Left ventricle myocardium superior (tissue), 1 donor: ENCODE measurements at regions of chr19 and their contacts with region 1.

Region 1: GRCh38 chr19:15563325-15563794 is 51.7 kb upstream of the CYP4F8 start:
- DNase-seq: peak; percentile 65
- ATAC-seq: peak; percentile 92

Region 2: GRCh38 chr19:15081911-15082310 is 481.4 kb before region 1 on chr19 and contains the start of gene OR1I1:
- intact Hi-C with region 1: loop called (anchors 10 kb)
- DNase-seq: no peak
- ATAC-seq: no peak
- total RNA-seq, gene OR1I1: not detected

Region 3: DNA sequence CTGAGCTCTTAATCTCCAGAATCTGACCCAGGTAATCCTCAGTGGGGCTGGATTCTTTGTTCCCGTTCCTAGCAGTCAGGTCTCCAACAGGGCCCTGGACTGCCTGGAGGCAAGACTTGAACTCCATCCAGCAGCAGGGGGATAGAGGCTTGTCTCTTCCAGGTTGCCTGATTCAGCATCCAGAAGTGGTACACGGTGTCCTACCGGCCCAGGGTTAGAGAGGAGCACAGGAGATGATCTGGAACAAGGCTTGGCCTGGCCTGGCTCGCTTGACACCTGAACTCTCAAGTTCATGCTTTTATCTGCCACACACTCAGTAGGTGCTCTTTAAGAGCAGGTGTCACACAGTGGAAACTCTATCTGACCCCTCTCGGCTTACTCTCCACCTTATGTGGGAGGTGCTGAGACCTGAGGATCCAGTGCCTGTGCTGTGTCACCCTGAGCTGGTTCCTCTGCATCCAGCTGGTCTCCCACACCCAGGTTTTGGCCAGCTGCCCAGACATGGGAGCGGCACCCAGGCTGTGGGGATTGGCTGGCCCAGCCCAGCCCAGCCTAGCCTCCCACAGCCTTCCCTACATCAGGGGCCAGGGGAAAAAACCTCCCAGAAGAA is 77.0 kb after region 1 on chr19 and contains the start of gene CYP4F3:
- intact Hi-C with region 1: no loop called
- DNase-seq: peak; percentile 85
- ATAC-seq: peak; percentile 95
- total RNA-seq, gene CYP4F3: 0.79 TPM

Region 4: DNA sequence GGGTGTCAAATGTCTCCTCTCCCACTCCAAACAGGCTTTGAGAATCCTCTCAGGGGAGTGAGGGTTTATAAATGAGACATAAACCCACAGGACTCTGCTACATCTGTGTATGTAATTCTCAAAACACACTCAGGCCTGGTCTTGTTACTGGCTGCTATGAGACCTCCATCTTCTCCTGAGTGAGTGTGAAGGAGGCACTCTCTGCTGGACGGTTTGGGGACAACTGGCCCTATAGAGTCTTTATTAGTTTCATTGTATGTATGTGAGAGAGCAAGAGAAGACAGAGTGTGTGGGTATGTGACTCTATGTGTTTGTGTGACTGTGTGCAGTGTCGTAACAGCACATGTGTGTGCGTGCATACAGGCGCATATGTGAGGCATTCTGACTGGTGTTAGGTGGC is 99.9 kb after region 1 on chr19:
- intact Hi-C with region 1: no loop called
- DNase-seq: no peak
- ATAC-seq: no peak